Activated B cell treated with CpG ODN at 0.5 μM for 24 hours (primary cell): ENCODE measurements at regions of chr2 and their contacts with region 1.

Region 1: DNA sequence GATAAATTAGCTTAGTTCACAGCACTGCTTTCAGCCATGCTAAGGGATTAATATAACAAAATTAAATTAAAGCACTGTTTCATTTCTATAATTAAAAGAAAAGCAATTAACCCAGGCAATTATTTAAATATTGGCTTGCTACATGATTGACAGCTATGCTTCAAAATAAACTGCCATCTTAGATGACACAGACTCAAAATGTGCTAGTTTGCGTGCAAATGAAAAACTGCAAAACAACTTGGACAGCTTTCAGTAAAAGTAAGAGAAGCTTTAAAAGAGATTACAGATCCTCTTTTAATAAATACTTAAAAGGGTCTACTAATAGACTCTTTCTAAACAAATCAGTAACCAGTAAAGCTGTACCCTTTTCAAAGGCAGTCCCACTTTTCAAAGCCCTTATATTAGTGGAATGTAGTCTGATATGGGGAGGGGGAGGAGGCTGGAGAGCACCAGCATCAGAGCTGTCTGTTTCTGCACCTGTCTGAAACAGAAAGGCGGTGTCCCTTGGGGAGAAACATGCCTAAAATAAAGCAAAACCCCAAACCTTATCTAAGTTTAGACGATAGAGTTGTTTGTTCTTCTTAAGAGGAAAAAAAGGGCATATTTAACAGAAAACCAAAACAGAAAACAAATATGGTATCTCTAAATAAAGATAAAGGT is 20.8 kb downstream of the EIF2AK3 start:
- DNase-seq: no peak
- ATAC-seq: peak; percentile 83
- H3K4me3 Mint-ChIP-seq: peak overlapping the region; percentile 26
- H3K27ac Mint-ChIP-seq: peak overlapping the region; percentile 91
- H3K4me1 Mint-ChIP-seq: peaks cover 85% of the 10 kb centered on the region
- H3K27me3 Mint-ChIP-seq: no peaks in the 10 kb centered on the region
- CTCF ChIP-seq: no peak

Region 2: GRCh38 chr2:88590998-88591613 is 15.4 kb before region 1 on chr2:
- CTCF ChIA-PET with region 1: interaction called, 20 read pairs
- POLR2A ChIA-PET with region 1: interaction called, 6 read pairs
- intact Hi-C with region 1: no loop called
- DNase-seq: no peak
- ATAC-seq: peak; percentile 88
- H3K4me3 Mint-ChIP-seq: no peak overlapping the region
- H3K27ac Mint-ChIP-seq: peak overlapping the region; percentile 70
- H3K4me1 Mint-ChIP-seq: peaks cover 25% of the 10 kb centered on the region
- H3K27me3 Mint-ChIP-seq: no peaks in the 10 kb centered on the region
- CTCF ChIP-seq: peak; percentile 35

Region 3: GRCh38 chr2:88845772-88846661 is 239.5 kb after region 1 on chr2:
- CTCF ChIA-PET with region 1: no interaction called
- POLR2A ChIA-PET with region 1: no interaction called
- intact Hi-C with region 1: loop called (anchors 5 kb)
- DNase-seq: peak; percentile 50
- ATAC-seq: peak; percentile 88
- H3K4me3 Mint-ChIP-seq: peak overlapping the region; percentile 55
- H3K27ac Mint-ChIP-seq: peak overlapping the region; percentile 97
- H3K4me1 Mint-ChIP-seq: peaks cover 98% of the 10 kb centered on the region
- H3K27me3 Mint-ChIP-seq: no peaks in the 10 kb centered on the region
- CTCF ChIP-seq: no peak